CD8-positive, alpha-beta T cell (primary cell): ENCODE measurements at regions of chr3 and their contacts with region 1.

Region 1: DNA sequence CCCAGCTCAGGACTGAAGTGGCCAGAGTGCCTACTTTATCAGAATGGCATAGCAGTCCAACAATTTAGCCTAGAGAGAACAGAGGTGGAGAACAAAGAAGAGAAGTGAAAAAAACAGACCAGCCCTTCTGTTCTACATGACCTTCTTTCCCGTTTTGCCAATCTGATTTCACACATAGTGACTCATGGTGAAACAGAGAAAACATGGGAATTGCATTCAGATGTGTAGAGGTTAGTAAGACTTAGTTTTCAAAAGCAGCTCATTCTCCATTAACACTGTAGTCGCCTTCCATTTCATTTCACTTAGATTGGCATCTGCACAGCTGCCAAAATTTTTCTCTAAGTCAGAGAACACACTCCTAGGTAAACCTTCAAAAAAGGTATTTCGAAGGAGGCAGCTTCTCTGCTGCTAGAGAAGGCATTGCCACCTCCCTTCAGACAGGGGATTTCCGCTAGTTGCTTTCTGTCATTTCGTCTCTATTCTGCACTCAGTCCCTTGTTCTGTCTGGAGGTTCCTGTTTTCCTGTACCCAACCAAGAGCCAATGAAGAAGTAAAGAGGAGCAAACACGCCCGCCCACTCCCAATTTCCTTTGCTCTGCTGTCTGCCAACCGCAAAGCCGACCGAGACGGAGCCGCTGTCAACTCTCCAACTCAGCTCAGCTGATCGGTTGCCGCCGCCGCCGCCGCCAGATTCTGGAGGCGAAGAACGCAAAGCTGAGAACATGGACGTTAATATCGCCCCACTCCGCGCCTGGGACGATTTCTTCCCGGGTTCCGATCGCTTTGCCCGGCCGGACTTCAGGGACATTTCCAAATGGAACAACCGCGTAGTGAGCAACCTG is at the start of gene ARL6IP5:
- DNase-seq: peak; percentile 76 to 96 (median 92)
- ATAC-seq: peak; percentile 68
- H3K4me3 ChIP-seq: peak within 1 kb of the TSS; percentile 93 to 96
- H3K4me3 Mint-ChIP-seq: peak within 1 kb of the TSS; percentile 96
- H3K27ac ChIP-seq: peak within 1 kb of the TSS; percentile 56 to 85
- H3K27ac Mint-ChIP-seq: peak within 1 kb of the TSS; percentile 98
- H3K4me1 ChIP-seq: peaks cover 60% of the 10 kb centered on the region
- H3K4me1 Mint-ChIP-seq: peaks cover 70% of the 10 kb centered on the region
- H3K27me3 ChIP-seq: no peaks in the 10 kb centered on the region
- H3K27me3 Mint-ChIP-seq: no peaks in the 10 kb centered on the region
- CTCF ChIP-seq: no peak
- total RNA-seq, gene ARL6IP5: 44.8 to 52.9 TPM

Region 2: GRCh38 chr3:67790043-67790442 is 1294.5 kb before region 1 on chr3:
- CTCF ChIA-PET with region 1: no interaction called
- POLR2A ChIA-PET with region 1: no interaction called
- intact Hi-C with region 1: no loop called
- DNase-seq: peak; percentile 47 to 85 (median 64)
- ATAC-seq: peak; percentile 78
- H3K4me3 ChIP-seq: no peak overlapping the region
- H3K4me3 Mint-ChIP-seq: no peak overlapping the region
- H3K27ac ChIP-seq: no peak overlapping the region
- H3K27ac Mint-ChIP-seq: no peak overlapping the region
- H3K4me1 ChIP-seq: peaks cover 6% of the 10 kb centered on the region
- H3K4me1 Mint-ChIP-seq: peaks cover 13% of the 10 kb centered on the region
- H3K27me3 ChIP-seq: no peaks in the 10 kb centered on the region
- H3K27me3 Mint-ChIP-seq: no peaks in the 10 kb centered on the region
- CTCF ChIP-seq: peak; percentile 70

Region 3: DNA sequence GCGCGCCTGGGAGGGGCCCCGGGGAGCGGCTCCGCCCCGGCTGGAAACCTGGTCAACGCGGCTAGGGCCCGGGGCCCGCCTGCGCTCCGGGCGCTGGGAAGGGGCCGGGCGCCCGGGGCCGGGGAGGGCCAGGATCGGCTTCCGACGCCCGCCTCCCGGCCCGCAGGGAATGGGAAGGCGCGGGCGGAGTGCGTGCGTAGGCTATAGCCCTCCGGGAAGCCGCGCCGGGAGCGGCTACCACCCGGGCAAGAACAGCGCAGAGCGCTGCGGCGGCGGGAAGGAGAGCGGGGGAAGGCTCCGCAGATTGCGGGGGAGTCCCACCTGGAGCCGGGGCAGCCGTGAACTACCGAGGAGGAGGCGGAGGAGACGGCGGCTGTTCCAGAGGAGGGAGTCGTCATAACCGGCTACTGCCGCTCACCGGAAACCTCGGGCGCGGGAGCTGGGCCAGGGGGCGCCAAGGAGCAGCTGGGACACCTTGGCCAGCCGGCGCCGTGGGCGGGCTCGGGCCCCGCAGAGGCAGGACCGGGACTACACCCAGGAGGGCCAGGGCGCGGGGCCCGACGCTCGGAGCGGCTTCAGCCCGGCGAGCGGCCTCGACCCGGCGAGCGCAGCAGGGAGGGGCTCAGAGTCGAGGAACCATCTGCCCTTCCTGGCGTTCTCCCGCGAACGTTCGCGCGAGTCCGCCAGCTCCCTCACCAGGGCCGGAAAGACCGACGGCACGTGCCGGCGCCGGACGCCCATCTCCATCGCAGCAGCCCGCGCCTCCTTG is 71.1 kb before region 1 on chr3 and contains the start of gene EOGT:
- CTCF ChIA-PET with region 1: no interaction called
- POLR2A ChIA-PET with region 1: interaction called, 3 read pairs
- intact Hi-C with region 1: loop called (anchors 5 kb)
- DNase-seq: peak; percentile 50 to 87 (median 81)
- ATAC-seq: peak; percentile 79
- H3K4me3 ChIP-seq: peak within 1 kb of the TSS; percentile 76 to 81
- H3K4me3 Mint-ChIP-seq: peak within 1 kb of the TSS; percentile 88
- H3K27ac ChIP-seq: peak within 1 kb of the TSS; percentile 44 to 72
- H3K27ac Mint-ChIP-seq: peak within 1 kb of the TSS; percentile 87
- H3K4me1 ChIP-seq: peaks cover 6% of the 10 kb centered on the region
- H3K4me1 Mint-ChIP-seq: peaks cover 26% of the 10 kb centered on the region
- H3K27me3 ChIP-seq: no peaks in the 10 kb centered on the region
- H3K27me3 Mint-ChIP-seq: no peaks in the 10 kb centered on the region
- CTCF ChIP-seq: peak; percentile 56
- total RNA-seq, gene EOGT: 9.9 to 15.2 TPM

Region 4: DNA sequence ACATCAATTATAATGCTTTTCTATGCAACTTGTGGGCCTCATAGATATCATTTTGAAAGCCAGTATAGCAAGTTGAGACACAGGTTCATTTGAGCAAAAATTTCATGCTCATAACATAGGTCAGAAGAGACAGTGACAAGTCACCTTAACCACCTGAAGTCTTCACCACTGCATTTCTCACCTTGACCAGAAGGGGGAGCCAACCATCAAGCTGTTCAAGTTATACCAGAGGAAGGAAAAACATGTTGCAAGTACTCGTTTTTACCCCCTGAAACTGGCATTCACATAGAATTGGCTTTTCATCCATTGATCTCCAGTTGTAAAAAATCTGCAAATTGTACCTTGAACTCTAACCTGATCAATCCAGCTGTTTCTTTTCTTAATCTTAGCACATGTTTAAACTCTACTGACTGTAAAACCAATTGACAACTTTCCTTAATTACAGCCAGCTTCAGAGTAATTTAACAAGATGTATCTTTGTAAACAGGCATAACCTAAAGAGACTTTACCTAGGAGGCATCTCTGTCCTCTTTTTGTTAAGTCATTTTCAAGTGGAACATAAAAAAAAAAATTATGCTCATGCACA is 36.4 kb after region 1 on chr3:
- CTCF ChIA-PET with region 1: interaction called, 11 read pairs
- POLR2A ChIA-PET with region 1: no interaction called
- intact Hi-C with region 1: loop called in 1 of 2 experiments (anchors 2 kb)
- DNase-seq: peak; percentile 63 to 88 (median 82)
- ATAC-seq: peak; percentile 92
- H3K4me3 ChIP-seq: no peak overlapping the region
- H3K4me3 Mint-ChIP-seq: no peak overlapping the region
- H3K27ac ChIP-seq: no peak overlapping the region
- H3K27ac Mint-ChIP-seq: no peak overlapping the region
- H3K4me1 ChIP-seq: no peaks in the 10 kb centered on the region
- H3K4me1 Mint-ChIP-seq: peaks cover 5% of the 10 kb centered on the region
- H3K27me3 ChIP-seq: no peaks in the 10 kb centered on the region
- H3K27me3 Mint-ChIP-seq: no peaks in the 10 kb centered on the region
- CTCF ChIP-seq: peak; percentile 96

Region 5: DNA sequence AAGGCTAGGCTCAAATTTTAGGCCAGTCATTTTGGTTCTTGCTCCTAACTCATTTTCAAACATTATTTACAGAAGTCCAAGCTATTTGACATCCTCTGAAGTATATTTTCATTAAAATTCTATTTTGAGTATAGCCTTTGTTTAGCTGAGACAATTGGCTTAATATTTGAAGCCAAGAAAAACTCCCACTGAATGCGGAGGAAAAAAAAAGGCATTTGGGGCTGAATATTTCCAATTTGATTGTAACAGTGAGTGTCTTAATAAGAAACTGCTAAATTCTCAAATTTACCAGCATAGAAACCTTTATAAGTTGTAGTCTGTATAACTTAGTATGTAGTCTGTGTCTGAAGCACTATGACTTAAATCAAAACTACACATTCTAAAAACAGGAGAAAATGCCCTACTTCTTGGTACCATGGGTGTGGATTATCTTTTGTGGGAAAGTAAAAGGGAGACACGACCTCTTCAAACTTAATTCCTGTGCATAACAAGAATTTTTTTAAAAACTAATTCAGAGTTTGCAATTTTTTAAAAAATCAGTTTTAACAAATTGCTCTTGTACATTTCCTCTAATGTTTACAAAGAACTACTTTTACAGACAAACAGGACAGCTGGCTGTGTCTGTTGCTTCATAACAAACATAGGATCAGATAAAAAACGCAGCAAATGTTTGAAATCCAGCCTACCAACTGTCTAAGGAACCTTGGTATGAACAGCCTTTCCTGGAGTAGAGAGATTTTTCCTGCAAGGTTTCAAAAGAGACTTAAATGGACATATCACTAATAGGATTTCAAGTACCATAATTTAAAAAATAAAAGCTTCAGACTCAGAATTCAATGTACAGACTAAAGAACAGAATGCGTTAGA is 90.6 kb after region 1 on chr3:
- CTCF ChIA-PET with region 1: no interaction called
- POLR2A ChIA-PET with region 1: no interaction called
- intact Hi-C with region 1: no loop called
- DNase-seq: no peak
- ATAC-seq: no peak
- H3K4me3 ChIP-seq: no peak overlapping the region
- H3K4me3 Mint-ChIP-seq: no peak overlapping the region
- H3K27ac ChIP-seq: no peak overlapping the region
- H3K27ac Mint-ChIP-seq: no peak overlapping the region
- H3K4me1 ChIP-seq: no peaks in the 10 kb centered on the region
- H3K4me1 Mint-ChIP-seq: peaks cover 5% of the 10 kb centered on the region
- H3K27me3 ChIP-seq: no peaks in the 10 kb centered on the region
- H3K27me3 Mint-ChIP-seq: no peaks in the 10 kb centered on the region
- CTCF ChIP-seq: no peak

Region 6: DNA sequence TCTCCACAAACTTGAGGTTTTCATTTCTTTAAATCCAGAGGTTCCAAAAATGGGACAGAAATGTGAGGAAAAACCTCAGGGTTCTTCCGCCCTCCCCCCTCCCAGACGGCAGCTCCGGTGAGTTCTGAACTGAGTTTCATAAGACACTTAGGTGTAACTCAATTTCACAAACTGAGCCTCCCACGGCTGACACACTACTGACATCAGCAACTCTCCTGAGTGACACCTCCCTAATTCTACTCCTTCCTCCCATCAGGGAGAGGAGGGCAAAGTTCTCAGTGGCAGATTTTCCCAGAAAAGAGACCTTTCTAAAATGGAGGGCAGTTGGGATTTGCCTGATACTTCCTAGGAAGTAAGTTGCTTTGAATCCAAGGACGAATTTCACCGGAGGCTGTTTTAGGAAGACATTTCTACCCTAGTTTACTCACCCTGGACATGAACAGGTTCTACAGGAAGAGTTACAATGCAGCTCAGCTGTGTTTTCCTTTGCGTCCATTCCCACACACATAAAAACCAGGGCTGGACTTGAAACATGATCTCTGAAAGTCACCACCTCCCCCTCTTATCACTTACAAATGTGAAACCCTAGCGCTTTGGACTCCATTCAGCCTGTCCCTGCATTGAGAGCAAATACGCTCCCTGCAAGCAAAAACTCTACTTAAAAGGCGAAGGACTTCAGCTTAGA is 116.0 kb after region 1 on chr3:
- CTCF ChIA-PET with region 1: no interaction called
- POLR2A ChIA-PET with region 1: no interaction called
- intact Hi-C with region 1: loop called (anchors 5 kb)
- DNase-seq: peak in 2 of 9 experiments; percentile 24
- ATAC-seq: no peak
- H3K4me3 ChIP-seq: no peak overlapping the region
- H3K4me3 Mint-ChIP-seq: peak overlapping the region; percentile 88
- H3K27ac ChIP-seq: no peak overlapping the region
- H3K27ac Mint-ChIP-seq: peak overlapping the region; percentile 5
- H3K4me1 ChIP-seq: peaks cover 25% of the 10 kb centered on the region
- H3K4me1 Mint-ChIP-seq: peaks cover 41% of the 10 kb centered on the region
- H3K27me3 ChIP-seq: no peaks in the 10 kb centered on the region
- H3K27me3 Mint-ChIP-seq: no peaks in the 10 kb centered on the region
- CTCF ChIP-seq: no peak

Region 7: GRCh38 chr3:69425261-69425660 is 340.7 kb after region 1 on chr3:
- CTCF ChIA-PET with region 1: no interaction called
- POLR2A ChIA-PET with region 1: no interaction called
- intact Hi-C with region 1: no loop called
- DNase-seq: peak in 3 of 9 experiments; percentile 12 to 45 (median 37)
- ATAC-seq: no peak
- H3K4me3 ChIP-seq: no peak overlapping the region
- H3K4me3 Mint-ChIP-seq: no peak overlapping the region
- H3K27ac ChIP-seq: no peak overlapping the region
- H3K27ac Mint-ChIP-seq: no peak overlapping the region
- H3K4me1 ChIP-seq: no peaks in the 10 kb centered on the region
- H3K4me1 Mint-ChIP-seq: no peaks in the 10 kb centered on the region
- H3K27me3 ChIP-seq: no peaks in the 10 kb centered on the region
- H3K27me3 Mint-ChIP-seq: peaks cover 3% of the 10 kb centered on the region
- CTCF ChIP-seq: peak; percentile 38